ENCODE measurements at regions of chr5 and their contacts with region 1.

Region 1: DNA sequence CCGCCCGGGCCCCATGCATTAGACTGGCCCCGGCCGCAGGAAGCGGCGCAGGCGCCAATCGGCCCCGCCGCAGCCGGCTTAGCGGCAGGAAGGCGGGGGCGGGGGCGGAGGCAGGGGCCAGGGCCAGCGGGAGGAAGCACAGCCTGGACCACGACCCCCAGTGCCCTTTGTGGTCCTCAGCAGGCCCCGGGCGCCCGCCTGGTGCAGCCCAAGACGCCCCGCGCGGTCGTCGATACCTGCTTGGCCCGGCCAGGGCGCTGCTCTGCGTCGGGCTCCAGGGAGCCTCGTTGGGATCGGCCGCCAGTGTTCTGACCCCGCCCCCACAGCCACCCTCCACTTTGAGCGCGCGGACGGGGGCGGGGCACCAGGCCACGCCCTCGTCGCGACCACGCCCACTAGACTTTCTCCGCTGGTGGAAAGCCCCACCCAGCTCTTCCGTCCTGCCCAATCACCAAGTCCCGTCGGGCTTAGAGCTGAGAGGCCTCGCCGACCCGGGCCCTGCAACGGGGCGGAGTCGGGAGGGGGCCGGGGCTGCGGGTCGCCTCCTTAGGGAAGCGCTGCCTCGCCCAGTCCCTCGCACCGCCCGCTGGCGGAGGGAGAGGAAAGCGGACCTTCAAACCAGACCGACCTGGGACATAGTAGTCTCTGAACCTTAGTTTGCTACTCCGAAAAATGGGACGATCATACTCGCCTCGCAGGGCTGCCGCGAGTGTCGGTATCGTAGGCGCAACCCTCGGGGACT is at the start of gene PDLIM7:
- DNase-seq: peak; percentile 98
- ATAC-seq: peak; percentile 66
- H3K4me3 ChIP-seq: peak within 1 kb of the TSS; percentile 76
- H3K27ac ChIP-seq: peak within 1 kb of the TSS; percentile 93
- H3K4me1 ChIP-seq: peaks cover 41% of the 10 kb centered on the region
- H3K27me3 ChIP-seq: no peaks in the 10 kb centered on the region
- CTCF ChIP-seq: peak; percentile 24; the same call in 1 of the 2 replicates
- total RNA-seq, gene PDLIM7: 159 and 195 TPM in 2 replicates

Region 2: DNA sequence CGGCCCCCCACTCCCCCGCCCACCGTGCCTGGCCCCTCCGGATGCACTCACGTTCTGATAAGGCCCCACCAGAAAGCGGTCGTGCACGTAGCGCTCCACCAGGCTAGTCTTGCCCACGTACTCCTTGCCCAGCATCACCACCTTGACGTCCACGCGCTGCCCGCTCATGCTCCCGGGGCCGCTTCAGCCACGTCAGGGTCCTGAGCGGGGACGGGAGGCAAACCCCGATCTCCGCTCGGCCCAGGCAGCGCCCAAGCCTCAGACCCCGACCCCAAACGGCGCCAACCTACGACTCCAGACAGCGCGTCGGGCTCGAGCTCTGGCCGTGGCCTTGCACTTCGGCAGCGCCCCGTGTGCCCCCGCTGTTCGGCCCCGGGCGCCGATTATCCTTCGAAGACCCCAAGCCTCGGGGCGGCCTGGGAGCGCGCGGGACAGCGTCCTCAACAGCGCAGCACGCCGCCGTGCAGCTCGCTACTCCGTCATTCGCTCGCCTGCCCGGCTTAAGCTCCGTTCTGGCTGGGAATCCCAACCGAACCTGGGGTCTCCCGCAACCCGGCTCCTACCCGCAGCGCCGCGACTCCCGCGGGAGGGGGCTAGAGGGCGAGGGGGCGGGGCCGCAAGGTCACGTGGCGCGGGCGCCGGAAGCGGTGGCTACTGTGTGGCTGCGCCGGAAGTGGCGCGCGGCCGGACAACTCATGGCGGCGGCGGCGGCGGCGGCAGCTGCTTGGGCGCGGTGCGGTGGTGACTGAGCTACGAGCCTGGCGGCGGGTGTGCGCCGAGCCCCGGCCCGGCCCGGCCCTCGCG is 194.1 kb before region 1 on chr5 and contains the starts of genes PRELID1 and RAB24:
- CTCF ChIA-PET with region 1: no interaction called
- POLR2A ChIA-PET with region 1: interaction called, 3 read pairs
- intact Hi-C with region 1: loop called (anchors 5 kb)
- DNase-seq: peak; percentile 89
- ATAC-seq: peak; percentile 27
- H3K4me3 ChIP-seq: peak within 1 kb of the TSS; percentile 86
- H3K27ac ChIP-seq: peak within 1 kb of the TSS; percentile 92
- H3K4me1 ChIP-seq: peaks cover 53% of the 10 kb centered on the region
- H3K27me3 ChIP-seq: no peaks in the 10 kb centered on the region
- CTCF ChIP-seq: peak; percentile 46
- total RNA-seq, gene PRELID1: 496 and 505 TPM in 2 replicates
- total RNA-seq, gene RAB24: 40.3 and 41.1 TPM in 2 replicates

Region 3: GRCh38 chr5:177390363-177391300 is 106.8 kb before region 1 on chr5:
- CTCF ChIA-PET with region 1: interaction called, 4 read pairs
- POLR2A ChIA-PET with region 1: no interaction called
- intact Hi-C with region 1: loop called (anchors 1 kb)
- DNase-seq: peak; percentile 95
- ATAC-seq: peak; percentile 73
- H3K4me3 ChIP-seq: peak overlapping the region; percentile 24; the same call in 1 of the 2 replicates
- H3K27ac ChIP-seq: peak overlapping the region; percentile 95
- H3K4me1 ChIP-seq: peaks cover 27% of the 10 kb centered on the region
- H3K27me3 ChIP-seq: no peaks in the 10 kb centered on the region
- CTCF ChIP-seq: peak; percentile 93

Region 4: DNA sequence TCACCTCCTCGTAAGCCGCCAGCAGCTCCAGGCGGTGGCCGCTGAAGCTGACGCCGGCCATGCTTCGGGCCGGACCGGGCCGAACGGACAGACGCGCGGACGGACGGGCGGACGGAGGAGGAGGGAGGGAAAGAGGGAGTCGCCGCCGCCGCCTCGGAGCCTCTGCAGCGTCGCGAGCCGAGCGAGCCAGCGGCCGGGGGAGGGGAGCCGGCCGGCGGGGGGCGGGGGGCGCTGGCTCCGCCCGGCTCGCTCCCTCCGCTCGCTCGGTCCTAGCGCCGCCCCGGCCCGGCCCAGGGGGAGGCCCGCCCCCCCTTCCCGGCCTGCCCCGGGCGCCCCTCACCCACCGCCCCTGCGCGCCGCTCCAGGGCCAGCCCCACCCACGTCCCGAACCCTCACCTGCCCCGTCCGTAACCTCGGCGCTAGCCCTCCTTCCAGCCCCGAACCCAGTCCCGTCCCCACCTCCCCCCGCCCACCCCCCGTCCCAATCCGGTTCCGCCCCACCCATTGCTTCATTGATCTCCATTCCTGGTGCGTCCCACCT is 23.9 kb before region 1 on chr5 and contains the start of gene DBN1:
- CTCF ChIA-PET with region 1: interaction called, 4 read pairs
- POLR2A ChIA-PET with region 1: interaction called, 6 read pairs
- intact Hi-C with region 1: loop called (anchors 1 kb)
- DNase-seq: peak; percentile 61
- ATAC-seq: peak; percentile 69
- H3K4me3 ChIP-seq: peak within 1 kb of the TSS; percentile 90
- H3K27ac ChIP-seq: no peak within 1 kb of the TSS
- H3K4me1 ChIP-seq: peaks cover 21% of the 10 kb centered on the region
- H3K27me3 ChIP-seq: no peaks in the 10 kb centered on the region
- CTCF ChIP-seq: no peak
- total RNA-seq, gene DBN1: 127 and 207 TPM in 2 replicates

Measured in PC-3 (cell line).